H1 (cell line): ENCODE measurements at regions of chr19 and their contacts with region 1.

Region 1: DNA sequence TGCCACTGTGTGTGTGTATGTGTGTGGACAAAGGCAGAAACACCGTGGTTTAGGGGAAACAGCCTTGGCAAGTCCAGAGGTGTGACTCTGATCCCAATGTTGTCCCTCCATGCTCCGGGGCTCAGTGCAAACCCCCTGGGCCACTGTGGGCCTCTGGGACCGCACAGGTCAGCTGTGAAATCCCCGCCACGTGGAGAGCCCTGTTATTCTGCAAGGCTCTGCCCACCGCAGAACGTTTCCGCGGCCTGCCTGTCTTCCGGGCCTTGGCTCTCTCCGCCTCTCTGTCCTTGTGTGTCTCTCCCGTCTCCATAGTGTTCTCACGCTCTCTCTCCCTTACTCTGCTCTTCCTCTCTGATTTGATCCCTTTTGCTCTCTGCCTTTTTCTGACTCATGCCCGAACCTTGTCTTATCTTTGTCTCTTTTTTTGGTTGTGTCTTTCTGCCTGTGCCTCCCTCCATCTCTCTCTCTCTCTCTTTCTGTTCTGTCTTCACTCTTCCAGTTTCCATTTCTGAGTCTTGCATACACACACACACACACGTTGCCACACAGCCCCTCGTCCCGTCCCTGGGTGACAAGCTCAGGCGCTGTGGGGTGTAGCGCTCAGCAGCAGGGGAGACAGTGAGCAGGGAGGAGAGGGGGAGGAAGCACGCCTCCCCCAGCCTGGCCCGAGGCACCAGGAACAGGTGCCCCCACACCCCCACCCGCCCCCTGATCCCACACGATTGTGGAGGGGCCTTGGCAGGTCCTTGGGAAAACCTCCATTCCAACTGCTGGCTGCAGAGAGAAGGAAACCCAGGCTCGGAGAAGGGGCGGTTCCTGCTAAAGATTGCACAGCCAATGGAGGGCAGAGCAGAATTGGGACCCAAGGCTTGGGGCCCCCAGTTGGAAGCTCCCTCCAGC is 3.0 kb downstream of the TTYH1 start:
- DNase-seq: peak in 1 of 2 experiments; percentile 50
- H3K4me3 ChIP-seq: no peak overlapping the region
- H3K27ac ChIP-seq: no peak overlapping the region
- H3K4me1 ChIP-seq: peaks cover 15 to 50% (median 38%) of the 10 kb centered on the region in 4 experiments
- H3K27me3 ChIP-seq: peaks cover 6 to 25% (median 21%) of the 10 kb centered on the region in 4 experiments
- CTCF ChIP-seq: no peak
- EP300 ChIP-seq: no peak
- POLR2A ChIP-seq: no peak
- RAD21 ChIP-seq: no peak

Region 2: DNA sequence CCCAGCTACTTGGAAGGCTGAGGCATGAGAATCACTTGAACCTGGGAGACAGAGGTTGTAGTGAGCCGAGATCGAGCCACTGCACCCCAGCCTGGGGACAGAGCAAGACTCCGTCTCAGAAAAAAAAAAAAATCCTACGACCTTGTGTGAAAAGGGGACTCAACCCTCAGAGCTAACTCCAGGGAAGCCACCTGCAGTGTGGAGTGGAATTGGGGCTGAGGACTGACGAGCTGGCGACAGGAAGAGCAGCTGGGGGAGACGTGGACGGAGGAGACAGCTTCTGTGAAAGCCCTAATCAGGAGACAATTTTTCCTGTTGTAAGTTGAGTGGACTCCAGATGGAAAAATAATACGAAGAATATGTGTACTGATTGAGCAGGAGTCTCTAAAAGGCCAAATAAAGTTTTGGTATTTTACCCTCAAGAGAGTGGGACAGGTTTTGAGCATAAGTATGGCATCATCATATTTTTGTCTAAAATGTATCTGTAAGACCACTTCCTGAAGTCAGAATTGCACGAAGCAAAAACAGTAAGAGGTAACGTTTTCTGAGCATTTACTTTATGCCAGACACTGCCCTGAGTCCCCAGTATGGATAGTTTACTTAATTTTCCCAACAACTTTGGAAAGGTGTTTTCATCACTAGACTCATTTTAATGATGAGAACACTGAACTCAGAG is 41.5 kb before region 1 on chr19:
- CTCF ChIA-PET with region 1: no interaction called
- POLR2A ChIA-PET with region 1: no interaction called
- DNase-seq: no peak
- H3K4me3 ChIP-seq: no peak overlapping the region
- H3K27ac ChIP-seq: no peak overlapping the region
- H3K4me1 ChIP-seq: no peaks in the 10 kb centered on the region
- H3K27me3 ChIP-seq: no peaks in the 10 kb centered on the region; a peak in 2 of 7 replicates
- CTCF ChIP-seq: no peak
- EP300 ChIP-seq: no peak
- POLR2A ChIP-seq: no peak
- RAD21 ChIP-seq: no peak

Region 3: DNA sequence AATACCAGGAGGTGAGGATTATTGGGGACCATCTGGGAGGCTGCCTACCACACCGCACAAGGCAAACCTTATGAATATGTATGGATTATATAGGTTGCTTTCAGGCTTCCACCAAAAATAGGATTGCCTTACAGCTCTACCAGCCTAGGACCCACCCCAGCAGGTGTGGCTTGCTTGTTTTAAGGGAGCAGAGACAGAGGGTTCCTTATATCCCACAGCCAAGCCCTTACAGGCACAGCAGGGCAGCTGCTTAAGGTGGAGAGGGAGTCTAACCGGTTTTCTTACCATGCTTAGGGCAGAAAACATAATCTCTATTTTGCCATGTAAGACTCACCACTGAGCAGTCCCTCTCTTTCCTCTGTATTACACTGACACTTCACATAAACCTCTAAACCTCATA is 19.1 kb before region 1 on chr19:
- CTCF ChIA-PET with region 1: interaction called, 11 read pairs
- POLR2A ChIA-PET with region 1: interaction called, 3 read pairs
- DNase-seq: no peak
- H3K4me3 ChIP-seq: no peak overlapping the region
- H3K27ac ChIP-seq: no peak overlapping the region
- H3K4me1 ChIP-seq: no peaks in the 10 kb centered on the region; a peak in 2 of 7 replicates
- H3K27me3 ChIP-seq: no peaks in the 10 kb centered on the region
- CTCF ChIP-seq: no peak
- EP300 ChIP-seq: no peak
- POLR2A ChIP-seq: no peak
- RAD21 ChIP-seq: no peak

Region 4: GRCh38 chr19:54430306-54431254 is 12.3 kb after region 1 on chr19:
- CTCF ChIA-PET with region 1: interaction called, 58 read pairs
- POLR2A ChIA-PET with region 1: interaction called, 133 read pairs
- DNase-seq: peak in 1 of 2 experiments; percentile 94
- H3K4me3 ChIP-seq: peak overlapping the region; percentile 37 to 67 (median 44)
- H3K27ac ChIP-seq: no peak overlapping the region
- H3K4me1 ChIP-seq: peaks cover 0 to 30% (median 12%) of the 10 kb centered on the region in 4 experiments; a peak in 6 of 7 replicates
- H3K27me3 ChIP-seq: peaks cover 0 to 3% (median 0%) of the 10 kb centered on the region in 4 experiments; a peak in 2 of 7 replicates
- CTCF ChIP-seq: peak; percentile 37 to 46 (median 42); a peak in 3 of 4 replicates
- EP300 ChIP-seq: no peak
- POLR2A ChIP-seq: 0 out of 3 replicates have a peak, but pooled peaks of 1 of the 2 experiments have one; percentile 13
- RAD21 ChIP-seq: peak; percentile 49 to 55

Region 5: GRCh38 chr19:54439174-54439853 is 21.0 kb after region 1 on chr19:
- CTCF ChIA-PET with region 1: interaction called, 58 read pairs
- POLR2A ChIA-PET with region 1: interaction called, 133 read pairs
- DNase-seq: peak in 1 of 2 experiments; percentile 78
- H3K4me3 ChIP-seq: no peak overlapping the region; a peak in 1 of 8 replicates
- H3K27ac ChIP-seq: no peak overlapping the region
- H3K4me1 ChIP-seq: peaks cover 0 to 27% (median 20%) of the 10 kb centered on the region in 4 experiments; a peak in 6 of 7 replicates
- H3K27me3 ChIP-seq: peaks cover 0 to 2% (median 0%) of the 10 kb centered on the region in 4 experiments; a peak in 1 of 7 replicates
- CTCF ChIP-seq: peak; percentile 78 to 88 (median 82)
- EP300 ChIP-seq: no peak
- POLR2A ChIP-seq: no peak
- RAD21 ChIP-seq: peak; percentile 76 to 83

Region 6: DNA sequence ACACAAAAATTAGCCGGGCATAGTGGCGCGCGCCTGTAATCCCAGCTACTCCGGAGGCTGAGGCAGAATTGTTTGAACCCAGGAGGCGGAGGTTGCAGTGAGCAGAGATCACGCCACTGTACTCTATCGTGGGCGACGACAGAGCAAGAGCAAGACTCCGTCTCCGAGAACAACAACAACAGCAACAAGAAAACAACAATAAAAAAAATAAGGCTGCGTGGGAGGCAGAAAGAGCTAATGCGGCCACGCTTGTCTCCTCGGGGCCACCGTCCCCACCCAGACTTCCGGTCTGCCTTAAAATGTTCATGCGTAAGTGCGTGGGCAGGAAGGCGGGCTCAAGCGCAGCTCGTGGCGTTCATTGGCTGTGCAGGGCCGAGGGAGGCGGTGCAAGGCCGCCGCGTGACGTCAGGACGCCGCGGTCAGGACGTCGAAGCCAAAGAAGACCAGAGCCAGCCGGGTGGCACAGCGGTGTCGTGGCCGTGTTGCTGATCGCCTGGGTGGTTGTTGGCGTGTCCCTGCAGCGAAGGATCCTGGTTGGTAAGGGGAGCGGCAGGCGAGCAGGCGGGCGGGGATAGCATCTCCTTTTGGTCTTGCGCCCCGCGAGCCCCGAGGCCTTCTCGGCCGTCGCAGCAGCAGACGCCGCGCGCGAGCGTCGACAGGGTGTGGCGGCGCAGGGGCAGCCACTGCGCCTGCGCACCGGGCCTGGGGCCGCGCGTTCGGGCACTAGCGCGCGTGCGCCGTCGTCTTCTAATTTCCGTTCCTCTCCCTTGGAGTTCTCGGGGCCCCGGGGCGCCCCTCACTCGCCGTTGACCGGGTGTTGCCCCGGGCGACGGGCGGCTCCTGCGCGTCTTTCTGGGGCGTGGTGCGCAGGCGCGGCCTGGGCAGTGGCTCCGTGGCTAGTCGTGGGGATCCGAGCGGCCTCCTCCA is 30.8 kb after region 1 on chr19 and contains the start of gene LENG8:
- CTCF ChIA-PET with region 1: interaction called, 9 read pairs
- POLR2A ChIA-PET with region 1: interaction called, 14 read pairs
- DNase-seq: peak in 1 of 2 experiments; percentile 92
- H3K4me3 ChIP-seq: peak within 1 kb of the TSS; percentile 61 to 90 (median 84)
- H3K27ac ChIP-seq: peak within 1 kb of the TSS; percentile 89
- H3K4me1 ChIP-seq: peaks cover 0 to 2% (median under 1%) of the 10 kb centered on the region in 4 experiments; a peak in 5 of 7 replicates
- H3K27me3 ChIP-seq: no peaks in the 10 kb centered on the region
- CTCF ChIP-seq: no peak
- EP300 ChIP-seq: no peak
- POLR2A ChIP-seq: peak in 1 of 2 experiments; percentile 92; a peak in 2 of 3 replicates
- RAD21 ChIP-seq: no peak
- total RNA-seq, gene LENG8: 108 TPM in 2 replicates

Region 7: GRCh38 chr19:54463531-54464043 is 45.3 kb after region 1 on chr19 and contains the start of gene LENG9:
- CTCF ChIA-PET with region 1: interaction called, 4 read pairs
- POLR2A ChIA-PET with region 1: interaction called, 19 read pairs
- DNase-seq: peak; percentile 92 to 98
- H3K4me3 ChIP-seq: peak within 1 kb of the TSS; percentile 68 to 87 (median 80)
- H3K27ac ChIP-seq: peak within 1 kb of the TSS; percentile 86
- H3K4me1 ChIP-seq: peaks cover 0 to 8% (median 5%) of the 10 kb centered on the region in 4 experiments; a peak in 5 of 7 replicates
- H3K27me3 ChIP-seq: peaks cover 0 to 11% (median 5%) of the 10 kb centered on the region in 4 experiments; a peak in 5 of 7 replicates
- CTCF ChIP-seq: no peak
- EP300 ChIP-seq: no peak
- POLR2A ChIP-seq: peak; percentile 43 to 57; a peak in 2 of 3 replicates
- RAD21 ChIP-seq: no peak
- total RNA-seq, gene LENG9: 3.9 and 4.0 TPM in 2 replicates